Panc1 (cell line): ENCODE measurements at regions of chr15 and their contacts with region 1.

Region 1: DNA sequence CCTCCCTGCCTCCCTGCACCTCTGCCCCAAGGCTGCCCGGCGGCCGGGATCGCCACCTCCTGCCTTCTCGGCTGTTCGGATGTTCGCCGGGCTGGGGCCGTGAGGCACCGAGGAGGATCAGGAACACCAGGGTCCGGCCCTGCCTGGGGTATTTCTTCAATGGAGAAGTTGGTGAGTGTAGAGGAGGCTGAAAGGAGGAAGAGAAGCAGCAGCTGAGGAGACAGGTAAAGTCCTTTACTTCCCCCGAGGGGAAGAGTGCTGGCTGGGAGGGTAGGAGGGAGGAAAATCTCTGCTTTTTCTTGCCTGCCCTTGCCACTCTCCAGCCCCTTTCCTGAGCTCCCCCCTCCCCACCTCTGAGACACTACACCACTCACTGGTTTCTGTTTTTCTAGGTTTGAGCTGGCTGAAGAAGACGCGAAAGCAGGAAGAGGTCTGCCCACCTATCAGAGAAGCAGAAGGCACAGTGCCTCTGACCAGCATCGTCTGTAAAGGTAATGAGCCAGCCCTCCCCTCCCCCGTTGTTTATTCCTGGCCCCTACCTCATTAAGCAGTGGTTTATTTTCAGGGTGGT is 519 bp downstream of the ASB7 start:
- DNase-seq: no peak
- ATAC-seq: no peak; the same call in 1 of the 2 replicates
- H3K4me3 ChIP-seq: peak overlapping the region; percentile 98 to 100
- H3K27ac ChIP-seq: peak overlapping the region; percentile 96
- H3K4me1 ChIP-seq: peaks cover 16% of the 10 kb centered on the region
- H3K27me3 ChIP-seq: no peaks in the 10 kb centered on the region
- CTCF ChIP-seq: no peak

Region 2: GRCh38 chr15:100580414-100580813 is 22.5 kb before region 1 on chr15:
- CTCF ChIA-PET with region 1: no interaction called
- POLR2A ChIA-PET with region 1: interaction called, 12 read pairs
- in situ Hi-C with region 1: no loop called
- intact Hi-C with region 1: no loop called
- DNase-seq: no peak
- ATAC-seq: no peak
- H3K4me3 ChIP-seq: no peak overlapping the region
- H3K27ac ChIP-seq: no peak overlapping the region
- H3K4me1 ChIP-seq: no peaks in the 10 kb centered on the region
- H3K27me3 ChIP-seq: no peaks in the 10 kb centered on the region
- CTCF ChIP-seq: no peak

Region 3: DNA sequence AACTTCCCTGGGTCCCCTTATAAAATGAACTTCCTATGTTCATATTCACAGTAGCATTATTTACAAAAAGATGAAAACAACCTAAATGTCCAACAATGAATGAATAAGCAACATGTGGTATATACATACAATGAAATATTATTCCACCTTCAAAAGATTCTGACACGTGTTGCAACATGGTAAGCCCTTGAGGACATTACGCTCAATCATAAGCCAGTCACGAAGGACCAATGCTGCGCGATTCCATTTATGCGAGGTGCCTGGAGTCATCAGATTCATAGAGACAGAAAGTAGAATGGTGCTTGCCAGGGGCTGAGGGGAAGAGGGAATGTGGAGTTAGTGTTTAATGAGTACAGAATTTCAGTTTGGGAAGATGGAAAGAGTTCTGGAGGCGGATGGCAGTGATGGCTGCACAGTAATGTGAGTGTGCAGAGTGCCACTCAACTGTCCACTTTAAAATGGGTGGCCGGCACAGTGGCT is 187.9 kb after region 1 on chr15:
- CTCF ChIA-PET with region 1: no interaction called
- POLR2A ChIA-PET with region 1: no interaction called
- in situ Hi-C with region 1: no loop called
- intact Hi-C with region 1: no loop called
- DNase-seq: no peak
- ATAC-seq: no peak
- H3K4me3 ChIP-seq: no peak overlapping the region
- H3K27ac ChIP-seq: no peak overlapping the region
- H3K4me1 ChIP-seq: 0 out of 2 replicates have a peak, but pooled peaks cover 3% of the 10 kb centered on the region
- H3K27me3 ChIP-seq: no peaks in the 10 kb centered on the region
- CTCF ChIP-seq: no peak